ENCODE measurements at regions of chr1 and their contacts with region 1.

Region 1: DNA sequence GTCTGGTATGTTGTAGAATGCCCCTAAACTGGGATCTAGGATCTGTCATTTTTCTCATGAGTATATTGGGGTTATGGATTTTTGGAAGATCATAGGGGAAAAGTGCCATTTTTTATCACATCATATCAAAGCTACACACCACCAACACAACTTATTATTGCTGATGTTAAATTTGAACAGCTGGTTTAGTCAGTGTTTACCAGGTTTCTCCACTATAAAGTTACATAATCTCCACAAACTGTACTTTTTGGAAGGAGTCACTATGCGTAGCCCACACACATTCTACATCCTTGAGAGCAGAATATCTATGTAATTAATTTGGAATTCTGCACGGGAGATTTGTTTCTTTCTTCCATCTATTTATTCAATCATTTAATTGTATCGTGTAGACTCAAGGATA is 35.2 kb downstream of the RC3H1 start:
- DNase-seq: no peak
- ATAC-seq: no peak
- H3K4me3 ChIP-seq: no peak overlapping the region
- H3K27ac ChIP-seq: no peak overlapping the region
- H3K4me1 ChIP-seq: no peaks in the 10 kb centered on the region
- H3K27me3 ChIP-seq: no peaks in the 10 kb centered on the region
- CTCF ChIP-seq: no peak

Region 2: GRCh38 chr1:173946380-173946921 is 40.5 kb before region 1 on chr1:
- intact Hi-C with region 1: loop called (anchors 5 kb)
- DNase-seq: no peak
- ATAC-seq: no peak
- H3K4me3 ChIP-seq: no peak overlapping the region
- H3K27ac ChIP-seq: no peak overlapping the region
- H3K4me1 ChIP-seq: no peaks in the 10 kb centered on the region
- H3K27me3 ChIP-seq: no peaks in the 10 kb centered on the region
- CTCF ChIP-seq: no peak

Measured in psoas muscle (tissue), 8 donors.